Activated CD4-positive, alpha-beta T cell treated with anti-CD3 and anti-CD28 coated beads for 36 hours (primary cell): ENCODE measurements at regions of chr2 and their contacts with region 1.

Region 1: DNA sequence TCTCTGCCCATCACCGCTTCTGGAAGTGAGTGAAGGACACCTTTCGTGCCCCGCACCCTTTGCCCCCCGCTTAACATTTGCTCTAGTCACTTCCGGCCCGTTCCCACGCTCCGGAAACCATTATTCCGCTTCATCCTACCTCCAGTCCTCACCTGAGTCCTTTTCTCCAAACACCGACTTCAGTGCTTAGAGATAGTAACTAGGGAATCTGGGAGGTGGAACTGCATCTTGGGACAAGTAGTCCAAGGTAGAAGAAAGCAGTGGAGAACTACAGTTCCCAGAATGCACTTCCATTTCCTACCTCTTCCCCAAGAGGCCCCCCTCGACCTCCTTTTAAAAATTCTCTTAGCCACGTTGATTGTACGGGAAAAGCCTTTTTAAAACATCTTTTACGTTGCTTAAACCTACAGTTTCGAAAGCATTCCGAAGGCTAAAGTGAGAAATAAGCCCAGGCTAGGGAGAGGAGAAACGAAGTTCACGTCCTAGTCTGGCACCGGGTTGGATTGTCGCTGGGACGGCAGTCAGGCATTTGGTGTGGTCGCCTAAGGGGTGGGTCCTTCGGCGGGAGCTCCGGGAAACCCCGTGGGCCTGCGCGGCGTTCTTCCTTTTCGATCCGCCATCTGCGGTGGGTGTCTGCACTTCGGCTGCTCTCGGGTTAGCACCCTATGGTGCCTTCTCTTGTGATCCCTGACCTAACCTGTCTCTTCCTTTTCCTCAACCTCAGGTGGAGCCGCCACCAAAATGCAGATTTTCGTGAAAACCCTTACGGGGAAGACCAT is at the starts of genes CLHC1 and RPS27A:
- DNase-seq: peak; percentile 95
- ATAC-seq: peak; percentile 90
- H3K4me3 Mint-ChIP-seq: peak within 1 kb of the TSS; percentile 98
- H3K27ac Mint-ChIP-seq: peak within 1 kb of the TSS; percentile 98
- H3K4me1 Mint-ChIP-seq: peaks cover 60% of the 10 kb centered on the region
- H3K27me3 Mint-ChIP-seq: no peaks in the 10 kb centered on the region
- total RNA-seq, gene CLHC1: 4.0 to 6.1 TPM
- total RNA-seq, gene RPS27A: 674 to 1,461 TPM

Region 2: GRCh38 chr2:53970724-53971602 is 1261.3 kb before region 1 on chr2 and contains the start of gene PSME4:
- CTCF ChIA-PET with region 1: no interaction called
- POLR2A ChIA-PET with region 1: no interaction called
- intact Hi-C with region 1: loop called in 1 of 2 experiments (anchors 5 kb)
- DNase-seq: peak; percentile 96
- ATAC-seq: peak; percentile 86
- H3K4me3 Mint-ChIP-seq: peak within 1 kb of the TSS; percentile 84
- H3K27ac Mint-ChIP-seq: peak within 1 kb of the TSS; percentile 97
- H3K4me1 Mint-ChIP-seq: peaks cover 35% of the 10 kb centered on the region
- H3K27me3 Mint-ChIP-seq: no peaks in the 10 kb centered on the region
- total RNA-seq, gene PSME4: 37.8 to 44.3 TPM

Region 3: DNA sequence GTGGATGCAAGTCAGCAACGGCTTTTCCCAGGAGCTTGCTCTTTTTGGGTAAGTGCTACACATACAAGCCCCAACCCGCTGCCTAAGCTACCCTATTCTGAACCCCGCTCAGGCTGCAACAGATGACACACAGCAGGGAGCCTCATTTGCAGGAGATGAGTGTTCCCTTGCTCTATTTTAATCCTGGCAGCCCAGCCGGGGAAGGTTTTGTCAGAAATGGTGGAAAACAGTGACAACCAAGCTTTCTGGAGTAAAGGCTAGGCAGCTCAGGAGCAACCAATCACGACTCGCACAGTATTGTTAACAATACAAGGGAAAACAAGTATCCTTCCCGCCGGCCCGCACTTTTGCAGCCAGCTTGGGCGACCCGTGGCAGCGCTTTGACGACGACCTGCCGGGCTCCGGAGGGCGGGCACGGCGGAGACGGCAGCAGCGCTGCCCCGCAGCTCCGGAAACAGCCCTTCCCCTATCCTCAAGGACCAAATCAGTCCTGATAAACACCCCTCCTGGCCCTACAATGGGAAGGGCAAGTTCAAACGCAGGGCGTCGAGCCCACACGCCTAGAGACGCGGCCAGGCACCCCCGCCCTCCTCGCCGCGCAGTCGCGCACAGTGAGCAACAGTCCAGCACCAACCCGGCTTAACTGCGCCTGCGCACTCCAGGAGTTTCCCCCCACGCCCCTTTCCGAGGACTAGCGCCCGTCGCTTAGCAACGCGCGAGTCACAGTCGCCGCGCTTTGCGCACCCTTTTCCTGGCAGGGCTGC is 901.9 kb before region 1 on chr2:
- CTCF ChIA-PET with region 1: no interaction called
- POLR2A ChIA-PET with region 1: no interaction called
- intact Hi-C with region 1: loop called in 1 of 2 experiments (anchors 5 kb)
- DNase-seq: peak; percentile 94
- ATAC-seq: peak; percentile 99
- H3K4me3 Mint-ChIP-seq: peak overlapping the region; percentile 72
- H3K27ac Mint-ChIP-seq: peak overlapping the region; percentile 44
- H3K4me1 Mint-ChIP-seq: peaks cover 15% of the 10 kb centered on the region
- H3K27me3 Mint-ChIP-seq: peaks cover 15% of the 10 kb centered on the region

Region 4: DNA sequence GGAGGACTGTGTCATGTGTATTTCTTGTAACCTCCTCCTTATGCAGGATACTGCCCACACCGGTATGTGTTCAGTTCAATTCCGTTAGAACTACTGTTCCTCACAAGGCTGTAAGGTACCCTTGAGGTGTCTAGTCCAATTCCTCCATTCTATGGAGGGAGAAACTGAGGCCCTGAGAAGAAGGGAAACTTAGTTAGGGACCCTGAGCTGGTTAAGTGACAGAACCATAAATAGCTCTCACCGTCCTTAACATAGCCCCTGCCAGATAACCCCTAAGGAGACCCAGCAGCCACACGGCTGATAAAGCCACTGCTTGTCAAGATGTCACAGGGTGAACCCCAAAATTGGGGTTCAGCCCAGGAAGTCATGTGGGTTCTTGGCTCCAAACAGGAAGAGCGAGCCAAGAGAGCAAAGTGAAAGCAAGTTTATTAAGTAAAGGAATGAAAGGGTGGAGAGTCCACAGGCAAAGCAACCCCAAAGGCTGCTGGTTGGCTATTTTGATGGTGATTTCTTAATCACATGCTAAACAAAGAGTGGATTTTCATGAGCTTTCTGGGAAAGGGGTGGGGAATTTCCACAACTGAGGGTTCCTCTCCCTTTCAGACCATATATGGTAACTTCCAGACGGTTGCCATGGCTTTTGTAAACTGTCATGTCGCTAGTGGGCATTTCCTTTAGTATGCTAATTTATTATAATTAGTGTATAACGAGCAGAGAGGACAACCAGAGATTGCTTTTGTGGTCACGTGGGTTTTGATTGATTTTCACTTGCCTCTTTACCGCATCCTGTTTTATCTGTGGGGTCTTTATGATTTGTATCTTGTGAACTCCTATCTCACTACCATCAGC is 98.6 kb before region 1 on chr2:
- CTCF ChIA-PET with region 1: no interaction called
- POLR2A ChIA-PET with region 1: no interaction called
- intact Hi-C with region 1: loop called in 1 of 2 experiments (anchors 1 kb)
- DNase-seq: peak; percentile 65
- ATAC-seq: peak; percentile 95
- H3K4me3 Mint-ChIP-seq: peak overlapping the region; percentile 65
- H3K27ac Mint-ChIP-seq: peak overlapping the region; percentile 96
- H3K4me1 Mint-ChIP-seq: peaks cover 17% of the 10 kb centered on the region
- H3K27me3 Mint-ChIP-seq: no peaks in the 10 kb centered on the region

Region 5: DNA sequence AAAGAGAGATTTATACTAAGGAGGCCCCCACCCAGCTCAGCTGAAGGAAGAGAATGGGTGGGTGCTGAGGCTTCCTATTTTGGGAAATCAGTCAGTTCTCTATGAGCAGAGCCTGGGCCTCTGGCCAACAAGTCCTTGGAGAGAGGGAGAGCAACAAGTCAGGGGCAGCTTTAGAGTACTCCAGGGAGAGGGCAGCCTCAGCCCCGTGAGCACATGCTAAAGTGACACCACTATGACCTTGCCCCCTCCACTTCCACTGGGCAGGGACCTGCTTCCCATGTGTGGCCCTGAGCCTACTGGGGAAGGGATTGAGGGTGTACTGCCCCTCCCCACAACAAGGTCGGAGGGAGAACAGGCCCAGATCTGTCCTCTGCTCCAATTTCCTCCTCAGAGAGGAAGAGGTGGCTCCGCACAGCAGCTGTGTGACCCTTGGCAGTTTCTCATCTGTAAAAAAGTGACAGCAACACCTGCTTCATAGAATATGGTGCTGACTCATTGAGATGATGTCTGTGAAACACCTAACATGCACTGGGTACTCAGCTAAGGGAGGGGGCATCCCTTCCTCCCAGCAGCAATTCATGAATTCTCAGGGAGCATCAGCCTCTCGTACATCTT is 73.1 kb before region 1 on chr2:
- CTCF ChIA-PET with region 1: no interaction called
- POLR2A ChIA-PET with region 1: no interaction called
- intact Hi-C with region 1: no loop called
- DNase-seq: no peak
- ATAC-seq: peak; percentile 47
- H3K4me3 Mint-ChIP-seq: no peak overlapping the region
- H3K27ac Mint-ChIP-seq: no peak overlapping the region
- H3K4me1 Mint-ChIP-seq: peaks cover 7% of the 10 kb centered on the region
- H3K27me3 Mint-ChIP-seq: no peaks in the 10 kb centered on the region

Region 6: GRCh38 chr2:55311444-55311870 is 79.2 kb after region 1 on chr2:
- CTCF ChIA-PET with region 1: no interaction called
- POLR2A ChIA-PET with region 1: no interaction called
- intact Hi-C with region 1: loop called in 1 of 2 experiments (anchors 2 kb)
- DNase-seq: peak; percentile 61
- ATAC-seq: peak; percentile 97
- H3K4me3 Mint-ChIP-seq: no peak overlapping the region
- H3K27ac Mint-ChIP-seq: no peak overlapping the region
- H3K4me1 Mint-ChIP-seq: peaks cover 23% of the 10 kb centered on the region
- H3K27me3 Mint-ChIP-seq: no peaks in the 10 kb centered on the region

Region 7: DNA sequence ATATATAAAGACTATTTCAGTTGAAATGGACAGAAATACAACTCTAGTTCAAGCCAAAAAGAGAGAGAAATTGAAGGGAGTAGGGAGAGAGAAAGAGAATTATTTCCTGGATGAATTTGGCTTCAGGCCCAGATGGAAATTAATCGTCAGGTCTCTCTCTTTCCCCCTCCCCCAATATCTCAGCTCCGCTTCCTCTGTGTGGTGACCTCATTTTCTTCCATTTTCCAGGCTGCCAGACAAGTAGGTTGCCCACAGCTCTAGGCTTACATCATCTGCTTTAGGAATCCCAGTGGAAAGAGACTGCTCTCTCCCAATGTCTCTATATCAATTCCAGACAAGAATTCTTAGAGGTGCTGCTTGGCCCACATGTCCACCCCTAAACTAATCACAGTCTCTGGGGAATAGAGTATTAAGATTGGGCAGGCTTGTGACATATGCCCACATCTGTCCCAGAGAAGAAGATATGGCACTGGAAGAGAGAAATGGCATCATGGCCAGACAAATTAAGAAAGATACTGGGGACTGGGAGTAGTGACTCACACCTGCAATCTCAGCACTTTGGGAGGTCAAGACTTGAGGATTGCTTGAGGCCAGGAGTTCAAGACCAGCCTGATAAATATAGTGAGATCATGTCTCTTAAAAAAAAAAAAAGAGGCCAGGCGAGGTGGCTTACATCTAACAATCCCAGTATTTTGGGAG is 250.1 kb after region 1 on chr2:
- CTCF ChIA-PET with region 1: no interaction called
- POLR2A ChIA-PET with region 1: no interaction called
- intact Hi-C with region 1: no loop called
- DNase-seq: no peak
- ATAC-seq: no peak
- H3K4me3 Mint-ChIP-seq: no peak overlapping the region
- H3K27ac Mint-ChIP-seq: no peak overlapping the region
- H3K4me1 Mint-ChIP-seq: no peaks in the 10 kb centered on the region
- H3K27me3 Mint-ChIP-seq: no peaks in the 10 kb centered on the region

Region 8: GRCh38 chr2:55519938-55520885 is 287.9 kb after region 1 on chr2:
- CTCF ChIA-PET with region 1: no interaction called
- POLR2A ChIA-PET with region 1: interaction called, 3 read pairs
- intact Hi-C with region 1: loop called (anchors 1 to 2 kb)
- DNase-seq: peak; percentile 52
- ATAC-seq: peak; percentile 25
- H3K4me3 Mint-ChIP-seq: peak overlapping the region; percentile 99
- H3K27ac Mint-ChIP-seq: peak overlapping the region; percentile 90
- H3K4me1 Mint-ChIP-seq: peaks cover 8% of the 10 kb centered on the region
- H3K27me3 Mint-ChIP-seq: no peaks in the 10 kb centered on the region